Right ventricle myocardium inferior (tissue), 1 donor: ENCODE measurements at regions of chr11 and their contacts with region 1.

Region 1: GRCh38 chr11:72040726-72041441 is 39.5 kb downstream of the NUMA1 start:
- DNase-seq: peak; percentile 96
- ATAC-seq: peak; percentile 85

Region 2: GRCh38 chr11:72080256-72080974 is 39.5 kb after region 1 on chr11 and contains the starts of genes LRRC51 and NUMA1:
- intact Hi-C with region 1: loop called (anchors 1 kb)
- DNase-seq: peak; percentile 100
- ATAC-seq: peak; percentile 98
- total RNA-seq, gene LRRC51: 3.7 TPM
- total RNA-seq, gene NUMA1: 81.3 TPM

Region 3: DNA sequence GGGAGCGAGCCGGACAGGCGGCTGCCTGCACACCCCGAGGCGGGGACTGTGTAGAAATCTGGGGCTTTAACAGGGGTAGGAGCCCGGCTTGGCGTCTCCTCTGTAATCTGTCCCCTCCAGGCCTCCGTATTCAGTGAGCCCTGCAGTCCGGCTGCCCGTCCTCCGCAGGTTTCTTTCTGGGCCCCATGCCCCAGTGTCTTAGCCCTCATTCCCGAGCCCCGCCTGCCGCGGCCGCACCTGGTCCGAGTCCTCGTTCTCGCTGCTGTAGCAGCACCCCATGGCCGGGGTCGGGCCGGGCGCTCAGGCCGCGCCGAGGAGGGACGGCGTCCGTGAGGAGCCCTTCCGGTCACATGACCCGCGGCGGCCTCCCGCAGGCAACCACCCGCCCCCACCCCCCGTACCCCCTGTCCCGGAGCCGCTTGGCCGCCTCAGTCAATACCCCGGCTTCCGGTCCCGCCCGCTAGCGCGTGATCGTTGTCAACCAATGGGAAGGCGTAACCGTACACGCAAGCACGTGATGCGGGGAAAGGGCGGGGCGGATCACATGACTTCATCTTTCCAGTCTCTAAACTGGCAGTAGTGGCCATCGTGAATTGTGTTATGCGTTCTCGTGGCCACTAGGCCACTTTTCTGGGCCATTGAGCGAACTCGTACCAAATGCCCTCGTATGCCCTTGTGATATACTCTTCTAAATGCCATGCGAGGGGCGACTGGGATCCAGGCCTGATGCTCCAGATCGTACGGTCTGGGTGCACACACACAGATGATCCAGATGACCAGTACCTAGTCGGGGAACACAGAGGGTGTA is 62.3 kb after region 1 on chr11 and contains the start of gene LAMTOR1:
- intact Hi-C with region 1: loop called (anchors 2 kb)
- DNase-seq: peak; percentile 100
- ATAC-seq: peak; percentile 99
- total RNA-seq, gene LAMTOR1: 80.3 TPM

Region 4: GRCh38 chr11:72123117-72123653 is 82.3 kb after region 1 on chr11:
- intact Hi-C with region 1: no loop called
- DNase-seq: no peak
- ATAC-seq: no peak